Sigmoid colon (tissue), 7 donors: ENCODE measurements at regions of chr22 and their contacts with region 1.

Region 1: GRCh38 chr22:25919452-25919851 is 177.5 kb downstream of the MYO18B start:
- DNase-seq: no peak
- H3K4me3 ChIP-seq: no peak overlapping the region
- H3K27ac ChIP-seq: no peak overlapping the region
- H3K4me1 ChIP-seq: no peaks in the 10 kb centered on the region
- H3K27me3 ChIP-seq: peaks cover 4 to 63% (median 7%) of the 10 kb centered on the region in 3 donors
- CTCF ChIP-seq: no peak
- EP300 ChIP-seq: no peak
- POLR2A ChIP-seq: no peak

Region 2: DNA sequence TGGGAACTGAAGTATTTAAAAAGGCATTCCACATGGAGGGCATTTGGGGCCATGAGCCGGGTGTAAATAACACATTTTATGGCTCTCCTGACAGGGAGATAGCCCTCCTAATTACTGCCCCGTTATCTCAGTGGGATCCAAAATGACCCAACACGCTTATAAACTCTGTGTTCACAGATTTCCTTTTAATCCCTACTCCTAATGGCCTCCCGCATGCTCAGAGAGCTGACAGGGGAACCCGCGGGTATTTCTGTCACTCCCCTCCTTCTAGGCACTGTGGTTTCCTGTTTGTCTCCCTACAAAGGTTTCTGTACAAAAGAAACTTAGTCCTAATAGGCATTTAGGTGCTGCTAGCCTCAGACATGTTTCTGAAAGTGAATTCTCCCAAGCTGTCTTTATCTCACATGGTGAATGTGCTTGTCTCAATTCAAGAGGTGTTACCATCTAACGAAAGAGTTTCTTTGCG is 47.0 kb after region 1 on chr22:
- intact Hi-C with region 1: no loop called
- DNase-seq: no peak
- H3K4me3 ChIP-seq: no peak overlapping the region
- H3K27ac ChIP-seq: no peak overlapping the region
- H3K4me1 ChIP-seq: no peaks in the 10 kb centered on the region
- H3K27me3 ChIP-seq: peaks cover 0 to 37% (median 0%) of the 10 kb centered on the region in 3 donors
- CTCF ChIP-seq: no peak
- EP300 ChIP-seq: no peak
- POLR2A ChIP-seq: no peak

Region 3: GRCh38 chr22:25987948-25988347 is 68.5 kb after region 1 on chr22:
- intact Hi-C with region 1: loop called (anchors 10 kb)
- DNase-seq: no peak
- H3K4me3 ChIP-seq: no peak overlapping the region
- H3K27ac ChIP-seq: no peak overlapping the region
- H3K4me1 ChIP-seq: no peaks in the 10 kb centered on the region
- H3K27me3 ChIP-seq: peaks cover 0 to 2% (median 0%) of the 10 kb centered on the region in 3 donors
- CTCF ChIP-seq: no peak
- EP300 ChIP-seq: no peak
- POLR2A ChIP-seq: no peak